ENCODE measurements at regions of chr3 and their contacts with region 1.

Region 1: DNA sequence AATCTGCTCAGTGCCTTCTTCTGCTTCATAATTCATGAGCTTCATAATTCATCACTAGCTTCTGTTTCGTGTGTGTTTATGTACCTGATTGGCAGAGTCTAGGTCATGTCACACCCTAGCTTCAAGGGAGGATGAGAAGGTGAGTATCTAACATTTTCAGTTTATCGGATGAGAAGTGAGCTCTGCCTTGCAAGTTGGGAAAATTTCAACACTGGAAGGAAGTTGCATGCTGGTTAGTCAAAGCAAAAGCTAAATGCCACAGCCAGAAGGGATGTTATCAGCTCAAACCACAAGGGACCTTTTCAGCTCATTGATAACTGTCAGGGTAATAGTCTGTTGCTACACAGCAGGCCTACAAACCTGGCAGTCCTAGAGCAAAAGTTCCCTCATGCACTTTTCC is 7.3 kb upstream of the TNFSF10 start:
- DNase-seq: no peak
- H3K4me3 Mint-ChIP-seq: peak overlapping the region; percentile 50
- H3K27ac Mint-ChIP-seq: peak overlapping the region; percentile 93
- H3K4me1 Mint-ChIP-seq: peaks cover 68% of the 10 kb centered on the region
- H3K27me3 Mint-ChIP-seq: no peaks in the 10 kb centered on the region

Region 2: GRCh38 chr3:172467170-172467824 is 63.3 kb before region 1 on chr3:
- intact Hi-C with region 1: no loop called
- DNase-seq: no peak
- H3K4me3 Mint-ChIP-seq: no peak overlapping the region
- H3K27ac Mint-ChIP-seq: no peak overlapping the region
- H3K4me1 Mint-ChIP-seq: peaks cover 9% of the 10 kb centered on the region
- H3K27me3 Mint-ChIP-seq: peaks cover 21% of the 10 kb centered on the region

Region 3: DNA sequence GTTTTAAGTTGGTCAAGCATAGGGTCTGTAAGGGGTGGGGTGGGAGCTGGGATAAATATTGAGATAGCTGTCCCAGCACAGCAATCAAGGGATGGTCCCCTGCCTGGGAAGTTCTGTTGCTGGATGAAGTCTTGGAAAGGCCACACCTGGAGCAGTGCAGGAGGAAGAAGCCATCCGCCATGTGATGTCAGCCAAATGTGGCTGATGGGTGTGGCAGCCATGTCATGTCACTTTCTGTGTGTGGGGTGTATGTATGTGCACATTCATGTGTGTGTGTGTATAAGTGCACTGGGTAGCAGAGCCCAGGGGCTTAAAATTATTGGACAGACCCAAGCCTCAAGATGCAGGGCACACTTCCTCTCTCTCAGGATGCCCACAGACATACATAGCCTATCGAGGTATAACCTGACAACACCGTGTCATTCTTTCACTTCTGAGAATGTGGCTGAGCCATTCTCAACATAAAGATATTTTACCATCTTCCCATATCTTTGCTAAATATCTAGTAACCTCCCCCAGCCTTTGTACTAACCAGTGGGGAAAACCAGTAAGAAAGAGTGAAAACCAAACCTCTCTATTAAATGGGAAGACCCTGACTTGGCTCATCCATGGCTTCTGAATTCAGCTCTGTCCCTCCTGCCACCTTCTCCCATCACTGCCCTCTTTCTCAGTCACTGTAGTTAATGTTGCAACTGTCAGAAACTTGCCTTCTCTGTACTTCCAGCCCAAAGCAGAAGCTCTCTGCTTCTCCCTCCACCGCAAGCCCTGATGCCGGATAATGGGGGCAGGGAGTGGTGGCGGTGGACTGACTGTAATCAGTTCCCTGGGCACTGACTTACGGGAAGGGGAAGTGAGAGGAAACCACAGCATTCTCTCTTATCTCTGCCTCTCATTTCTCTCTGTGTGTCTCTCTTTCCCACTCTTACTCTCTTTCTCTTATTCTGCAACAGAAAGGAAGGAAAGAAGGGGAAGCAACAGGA is 18.5 kb before region 1 on chr3:
- intact Hi-C with region 1: loop called (anchors 1 kb)
- DNase-seq: peak; percentile 69
- H3K4me3 Mint-ChIP-seq: peak overlapping the region; percentile 43
- H3K27ac Mint-ChIP-seq: peak overlapping the region; percentile 88
- H3K4me1 Mint-ChIP-seq: peaks cover 98% of the 10 kb centered on the region
- H3K27me3 Mint-ChIP-seq: no peaks in the 10 kb centered on the region

Region 4: DNA sequence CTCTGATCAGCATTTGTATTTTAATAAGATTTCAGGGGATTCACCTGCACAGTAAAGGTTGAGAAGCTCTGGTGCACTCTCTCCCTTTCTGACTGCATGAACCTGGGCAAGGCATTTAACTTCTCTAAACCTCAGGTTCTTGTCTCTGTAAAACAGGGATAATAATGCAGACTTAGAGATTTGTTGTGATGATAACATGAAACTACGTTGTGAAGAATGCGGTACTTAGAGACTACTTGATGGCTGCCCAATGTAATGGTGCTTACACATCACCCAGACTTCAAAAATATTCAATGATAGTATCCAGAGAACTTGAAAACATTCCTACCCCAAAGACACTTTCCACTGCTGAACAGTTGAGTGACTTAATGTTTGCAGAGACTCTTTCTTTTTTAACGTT is 12.4 kb after region 1 on chr3:
- intact Hi-C with region 1: loop called (anchors 1 kb)
- DNase-seq: no peak
- H3K4me3 Mint-ChIP-seq: no peak overlapping the region
- H3K27ac Mint-ChIP-seq: no peak overlapping the region
- H3K4me1 Mint-ChIP-seq: peaks cover 54% of the 10 kb centered on the region
- H3K27me3 Mint-ChIP-seq: no peaks in the 10 kb centered on the region

Region 5: DNA sequence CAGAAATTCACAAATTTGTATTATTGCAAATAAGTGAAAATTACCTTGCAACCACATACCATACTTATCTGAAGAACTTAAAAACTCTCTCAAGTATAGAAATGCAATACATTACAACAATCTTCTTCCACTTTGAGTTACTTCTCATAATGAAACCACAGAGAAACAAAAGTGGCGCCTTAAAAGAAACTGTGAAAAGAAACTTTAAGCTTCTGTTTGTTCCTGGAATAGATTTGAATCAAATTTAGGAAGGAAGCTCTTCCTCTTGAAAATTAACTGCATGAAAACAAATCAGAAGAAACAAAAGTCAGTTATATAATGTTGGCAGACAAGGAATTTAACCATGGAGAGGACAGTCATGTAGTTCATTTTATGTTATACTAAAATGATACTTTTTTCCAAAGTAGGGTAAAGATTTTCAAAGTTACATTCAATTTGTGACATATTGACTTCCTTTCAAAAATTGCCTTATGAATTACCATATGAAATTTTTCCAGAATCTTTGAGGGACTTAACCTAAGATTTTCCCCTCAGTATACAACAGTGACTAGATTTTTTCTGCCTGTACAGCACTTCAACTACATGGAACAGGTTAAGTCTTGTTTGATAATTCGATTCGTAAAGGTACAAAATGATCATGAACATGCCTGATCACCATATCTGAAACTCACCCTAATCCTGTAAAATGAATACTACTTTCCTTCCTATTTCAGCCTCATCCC is 50.3 kb after region 1 on chr3:
- intact Hi-C with region 1: loop called (anchors 1 kb)
- DNase-seq: no peak
- H3K4me3 Mint-ChIP-seq: peak overlapping the region; percentile 79
- H3K27ac Mint-ChIP-seq: peak overlapping the region; percentile 88
- H3K4me1 Mint-ChIP-seq: peaks cover 97% of the 10 kb centered on the region
- H3K27me3 Mint-ChIP-seq: no peaks in the 10 kb centered on the region